H1 (cell line): ENCODE measurements at regions of chr22 and their contacts with region 1.

Region 1: GRCh38 chr22:37643225-37643847 is 3.9 kb downstream of the SH3BP1 start:
- DNase-seq: peak in 1 of 2 experiments; percentile 100
- H3K4me3 ChIP-seq: no peak overlapping the region
- H3K27ac ChIP-seq: no peak overlapping the region
- H3K4me1 ChIP-seq: peaks cover 0 to 18% (median 14%) of the 10 kb centered on the region in 4 experiments; a peak in 6 of 7 replicates
- H3K27me3 ChIP-seq: no peaks in the 10 kb centered on the region
- CTCF ChIP-seq: peak; percentile 81 to 92 (median 91)
- EP300 ChIP-seq: no peak
- POLR2A ChIP-seq: no peak
- RAD21 ChIP-seq: peak; percentile 59 to 83

Region 2: DNA sequence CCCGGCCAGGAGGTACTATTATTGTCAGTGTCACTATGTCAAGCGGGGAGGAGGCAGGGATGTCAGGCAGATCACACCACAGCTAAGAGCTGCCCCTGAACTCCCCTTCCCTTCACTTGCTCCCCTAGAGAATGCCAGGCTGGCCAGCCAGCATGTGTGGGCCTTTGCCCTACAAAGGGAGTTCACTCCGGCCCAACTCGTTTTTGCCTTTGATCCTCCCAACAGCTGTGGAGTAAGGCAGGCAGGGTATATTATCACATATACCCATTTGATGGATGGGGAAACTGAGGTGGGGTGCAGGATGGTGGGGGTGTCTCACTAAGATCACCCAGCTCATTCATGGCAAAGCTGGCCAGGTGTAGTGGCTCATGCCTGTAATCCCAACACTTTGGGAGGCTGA is 94.4 kb before region 1 on chr22:
- CTCF ChIA-PET with region 1: no interaction called
- POLR2A ChIA-PET with region 1: no interaction called
- DNase-seq: no peak
- H3K4me3 ChIP-seq: no peak overlapping the region
- H3K27ac ChIP-seq: no peak overlapping the region
- H3K4me1 ChIP-seq: peaks cover 5 to 31% (median 18%) of the 10 kb centered on the region in 4 experiments
- H3K27me3 ChIP-seq: 0 out of 7 replicates have a peak, but pooled peaks cover 0 to 3% (median 0%) of the 10 kb centered on the region in 4 experiments
- CTCF ChIP-seq: no peak
- EP300 ChIP-seq: no peak
- POLR2A ChIP-seq: no peak
- RAD21 ChIP-seq: no peak

Region 3: GRCh38 chr22:37608477-37609239 is 34.7 kb before region 1 on chr22 and contains the start of gene GGA1:
- CTCF ChIA-PET with region 1: interaction called, 35 read pairs
- POLR2A ChIA-PET with region 1: interaction called, 19 read pairs
- DNase-seq: peak; percentile 83 to 90
- H3K4me3 ChIP-seq: peak within 1 kb of the TSS; percentile 69 to 91 (median 82)
- H3K27ac ChIP-seq: peak within 1 kb of the TSS; percentile 93
- H3K4me1 ChIP-seq: peaks cover 0 to 8% (median 6%) of the 10 kb centered on the region in 4 experiments; a peak in 6 of 7 replicates
- H3K27me3 ChIP-seq: no peaks in the 10 kb centered on the region
- CTCF ChIP-seq: no peak; a peak in 1 of 4 replicates
- EP300 ChIP-seq: 0 out of 3 replicates have a peak, but pooled peaks of 1 of the 2 experiments have one; percentile 9
- POLR2A ChIP-seq: peak; percentile 35 to 83
- RAD21 ChIP-seq: no peak
- total RNA-seq, gene GGA1: 46.5 and 49.3 TPM in 2 replicates

Region 4: GRCh38 chr22:37658133-37659065 is 15.1 kb after region 1 on chr22 and contains the start of gene PDXP:
- CTCF ChIA-PET with region 1: interaction called, 165 read pairs
- POLR2A ChIA-PET with region 1: interaction called, 26 read pairs
- DNase-seq: peak; percentile 98 to 99
- H3K4me3 ChIP-seq: peak within 1 kb of the TSS; percentile 71 to 94 (median 76)
- H3K27ac ChIP-seq: no peak within 1 kb of the TSS
- H3K4me1 ChIP-seq: peaks cover 0 to 21% (median 6%) of the 10 kb centered on the region in 4 experiments; a peak in 5 of 7 replicates
- H3K27me3 ChIP-seq: no peaks in the 10 kb centered on the region
- CTCF ChIP-seq: no peak
- EP300 ChIP-seq: no peak
- POLR2A ChIP-seq: peak in 1 of 2 experiments; percentile 63; a peak in 2 of 3 replicates
- RAD21 ChIP-seq: no peak
- total RNA-seq, gene PDXP: 35.7 and 36.6 TPM in 2 replicates

Region 5: DNA sequence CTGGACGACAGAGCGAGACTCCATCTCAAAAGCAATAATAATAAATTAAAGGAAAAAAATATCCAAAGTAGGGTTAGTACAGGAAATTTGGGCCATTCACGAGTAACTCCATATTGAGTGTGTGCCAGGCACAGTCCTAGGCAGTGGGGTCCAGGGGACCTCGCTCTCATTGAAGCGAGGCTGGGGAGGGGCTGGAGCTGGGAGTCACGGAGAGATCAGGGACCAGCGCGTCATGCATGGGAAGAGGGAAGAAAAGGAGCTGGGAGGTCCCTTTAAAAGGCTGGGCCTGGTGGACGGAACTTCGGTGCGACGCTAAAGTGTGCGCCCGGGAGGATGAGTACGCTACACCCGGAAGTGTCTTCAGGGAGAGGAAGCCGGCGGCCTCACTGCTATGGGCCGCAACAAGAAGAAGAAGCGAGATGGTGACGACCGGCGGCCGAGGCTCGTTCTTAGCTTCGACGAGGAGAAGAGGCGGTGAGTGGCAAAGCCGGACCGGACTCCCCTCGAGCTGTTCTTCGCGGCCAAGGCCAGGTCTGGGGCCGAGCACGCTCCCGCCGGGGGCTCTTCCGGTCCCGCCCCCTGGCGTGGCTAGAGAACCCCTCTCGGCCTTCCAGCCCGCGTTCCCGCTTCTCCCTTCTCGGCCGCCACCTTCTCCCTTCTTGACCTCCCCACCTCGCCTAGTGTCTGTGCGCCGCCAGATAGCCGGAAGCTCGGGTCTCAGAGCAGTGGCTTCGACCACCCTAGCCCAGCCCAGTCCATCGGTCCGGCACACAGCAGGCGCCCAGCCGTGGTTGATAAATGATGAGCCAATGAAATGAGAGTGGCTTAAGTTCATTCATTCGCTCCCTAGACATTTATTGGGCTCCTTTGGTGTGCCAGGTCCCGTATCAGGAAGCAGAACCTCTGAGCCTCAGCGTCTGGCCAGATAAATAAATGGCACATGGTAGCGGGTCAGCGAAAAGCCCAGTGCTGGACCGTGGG is 43.0 kb after region 1 on chr22 and contains the start of gene NOL12:
- CTCF ChIA-PET with region 1: interaction called, 261 read pairs
- POLR2A ChIA-PET with region 1: interaction called, 15 read pairs
- DNase-seq: peak; percentile 69 to 91
- H3K4me3 ChIP-seq: peak within 1 kb of the TSS; percentile 62 to 97 (median 87)
- H3K27ac ChIP-seq: peak within 1 kb of the TSS; percentile 88
- H3K4me1 ChIP-seq: peaks cover 0 to 6% (median 2%) of the 10 kb centered on the region in 4 experiments; a peak in 4 of 7 replicates
- H3K27me3 ChIP-seq: no peaks in the 10 kb centered on the region
- CTCF ChIP-seq: no peak
- EP300 ChIP-seq: no peak
- POLR2A ChIP-seq: peak in 1 of 2 experiments; percentile 88; a peak in 2 of 3 replicates
- RAD21 ChIP-seq: no peak
- total RNA-seq, gene NOL12: 26.7 and 28.3 TPM in 2 replicates

Region 6: GRCh38 chr22:37734964-37735451 is 91.7 kb after region 1 on chr22:
- CTCF ChIA-PET with region 1: interaction called, 23 read pairs
- POLR2A ChIA-PET with region 1: interaction called, 5 read pairs
- DNase-seq: peak in 1 of 2 experiments; percentile 73
- H3K4me3 ChIP-seq: no peak overlapping the region
- H3K27ac ChIP-seq: no peak overlapping the region
- H3K4me1 ChIP-seq: no peaks in the 10 kb centered on the region
- H3K27me3 ChIP-seq: peaks cover 2 to 49% (median 39%) of the 10 kb centered on the region in 4 experiments
- CTCF ChIP-seq: peak; percentile 47 to 62 (median 56)
- EP300 ChIP-seq: no peak
- POLR2A ChIP-seq: no peak
- RAD21 ChIP-seq: peak; percentile 34 to 66; a peak in 3 of 4 replicates